ENCODE measurements at regions of chr9 and their contacts with region 1.

Region 1: GRCh38 chr9:37496020-37496419 is 10.3 kb downstream of the POLR1E start:
- DNase-seq: no peak

Region 2: GRCh38 chr9:37776328-37776727 is 280.3 kb after region 1 on chr9:
- intact Hi-C with region 1: loop called in 1 of 2 experiments (anchors 10 kb)
- DNase-seq: no peak

Measured in posterior vena cava (tissue), 2 donors.